Right ventricle myocardium inferior (tissue), 1 donor: ENCODE measurements at regions of chr4 and their contacts with region 1.

Region 1: DNA sequence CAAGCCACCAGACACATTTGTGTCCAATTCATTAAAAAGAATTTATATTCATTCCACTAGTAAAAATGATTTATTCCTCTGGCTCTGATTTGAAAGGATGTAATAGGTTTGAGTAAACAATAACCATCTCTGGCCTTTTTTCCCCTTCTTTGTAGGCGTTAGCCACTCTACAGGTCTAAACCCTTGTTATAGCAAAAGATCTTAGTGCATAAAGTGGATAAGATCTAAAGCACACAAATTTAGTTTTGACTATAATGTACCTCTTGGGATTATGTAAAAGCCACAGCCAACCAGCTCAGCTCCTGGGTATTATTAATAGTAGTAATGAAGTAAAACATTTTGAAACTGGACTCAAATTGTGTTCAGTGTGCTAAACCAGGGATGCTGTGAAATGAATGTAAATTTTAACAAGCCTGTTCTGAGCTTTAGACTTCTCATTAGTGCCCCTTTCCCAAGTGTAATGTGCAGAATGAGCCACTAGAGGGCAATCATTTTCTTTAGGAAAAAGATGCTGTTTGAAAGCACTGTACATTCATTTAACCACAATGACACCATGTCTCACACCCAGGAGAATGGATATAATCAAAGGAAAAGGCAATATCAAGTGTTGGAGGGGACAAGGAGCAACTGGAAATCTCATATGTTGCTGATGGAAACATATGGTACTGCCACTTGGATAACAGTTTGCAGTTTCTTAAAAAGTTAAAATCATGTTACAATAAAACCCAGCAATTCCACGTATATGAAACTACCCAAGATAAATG is 69.7 kb downstream of the KLHL8 start:
- DNase-seq: no peak
- ATAC-seq: peak; percentile 67

Region 2: GRCh38 chr4:86924811-86925210 is 225.9 kb before region 1 on chr4:
- intact Hi-C with region 1: loop called (anchors 5 kb)
- DNase-seq: no peak
- ATAC-seq: no peak

Region 3: DNA sequence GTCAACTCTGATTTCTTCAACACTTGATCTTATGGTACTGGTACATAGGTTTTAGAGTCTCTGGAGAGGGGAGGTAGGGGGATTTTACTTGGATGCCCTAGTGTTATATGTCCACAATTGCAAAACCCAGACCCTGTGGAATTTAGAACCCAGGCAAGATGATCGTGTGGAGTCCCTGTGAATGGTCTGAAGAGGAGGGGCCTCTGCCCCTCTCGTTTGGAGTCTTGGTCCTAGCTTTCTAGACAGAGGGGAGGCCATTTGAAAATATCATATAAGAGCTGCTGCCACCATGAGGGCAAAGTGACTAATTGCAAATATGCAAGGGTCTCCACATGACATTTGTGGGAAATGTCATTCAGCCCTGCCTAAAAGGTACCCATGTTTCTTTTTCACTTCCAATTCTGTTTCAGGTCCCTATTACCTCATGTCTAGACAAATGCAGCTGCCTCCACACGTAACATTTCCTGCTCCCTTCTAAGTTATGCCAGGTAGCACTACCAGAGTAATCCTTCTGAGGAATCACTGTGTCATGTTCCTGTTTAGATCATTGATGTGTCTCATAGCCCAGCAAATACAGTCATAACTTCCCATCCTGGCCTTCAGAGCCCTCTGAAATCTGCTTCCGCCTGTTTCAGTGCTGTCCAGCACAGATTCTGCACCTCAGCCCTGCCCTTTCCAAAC is 57.1 kb before region 1 on chr4:
- intact Hi-C with region 1: no loop called
- DNase-seq: no peak
- ATAC-seq: peak; percentile 74

Region 4: DNA sequence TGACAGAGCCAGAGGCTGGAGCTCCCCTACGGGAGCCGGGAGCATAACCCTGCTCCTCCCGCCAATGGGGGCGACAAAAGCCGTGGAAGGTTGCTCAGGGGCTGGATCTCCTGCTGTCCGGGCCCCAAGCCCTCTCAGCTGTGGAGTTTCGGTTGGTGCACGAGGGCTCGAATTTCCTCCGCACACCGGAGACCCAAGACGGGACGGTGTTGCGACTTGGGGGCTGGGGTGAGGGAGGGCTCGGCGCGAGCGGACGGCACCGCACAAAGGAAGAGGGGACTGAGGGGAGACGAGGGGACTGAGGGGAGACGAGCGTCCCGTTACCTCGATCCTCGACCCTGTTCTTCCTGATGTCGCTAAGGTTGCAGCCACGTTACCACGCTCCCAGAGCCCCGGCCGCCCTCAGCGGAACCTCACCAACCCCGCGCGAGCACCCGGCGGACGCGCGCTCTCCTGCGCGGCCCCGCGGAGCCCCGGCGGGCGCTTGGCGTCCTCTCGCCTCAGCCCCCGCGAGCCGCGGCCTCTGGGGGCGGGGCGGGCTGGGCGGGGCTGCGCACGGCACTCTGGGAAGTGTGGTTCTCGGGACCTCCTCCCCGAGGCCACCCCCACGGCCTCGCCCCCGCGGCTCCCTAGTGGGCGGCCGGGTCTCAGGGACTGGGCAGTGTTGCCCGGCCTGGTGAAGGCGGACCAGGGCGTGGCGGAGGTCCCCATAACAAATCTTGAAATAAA is 69.6 kb after region 1 on chr4 and contains the start of gene KLHL8:
- intact Hi-C with region 1: loop called (anchors 5 kb)
- DNase-seq: peak; percentile 92
- ATAC-seq: peak; percentile 100
- total RNA-seq, gene KLHL8: 12.0 TPM

Region 5: DNA sequence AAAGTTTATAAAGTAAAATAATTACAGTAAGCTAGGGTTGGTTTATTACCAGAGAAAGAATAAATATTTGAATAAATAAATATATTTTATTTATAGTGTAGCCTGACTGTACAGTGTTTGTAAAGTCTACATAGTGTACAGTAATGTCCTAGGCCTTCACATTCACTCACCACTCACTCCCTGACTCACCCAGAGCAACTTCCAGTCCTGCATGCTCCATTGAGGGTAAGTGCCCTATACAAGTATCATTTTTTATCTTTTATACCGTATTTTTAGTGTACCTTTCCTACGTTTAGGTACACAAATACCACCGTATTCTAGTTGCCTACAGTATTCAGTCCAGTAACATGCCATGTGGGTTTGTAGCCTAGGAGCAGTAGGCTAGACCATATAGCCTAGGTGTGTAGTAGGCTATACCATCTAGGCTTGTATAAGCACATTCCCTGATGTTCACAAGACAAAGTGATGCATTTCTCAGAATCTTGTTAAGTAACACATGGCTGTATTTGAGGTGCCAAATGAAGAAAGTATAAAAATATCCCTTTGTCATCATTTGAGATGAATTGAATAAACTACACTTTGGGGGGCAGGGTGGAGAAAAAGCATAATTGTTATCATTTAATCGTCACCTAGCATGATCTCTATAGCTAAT is 84.5 kb after region 1 on chr4:
- intact Hi-C with region 1: loop called (anchors 1 kb)
- DNase-seq: no peak
- ATAC-seq: no peak